Activated CD4-positive, alpha-beta T cell treated with anti-CD3 and anti-CD28 coated beads for 36 hours (primary cell): ENCODE measurements at regions of chr9 and their contacts with region 1.

Region 1: GRCh38 chr9:97982683-97983588 is at the start of gene ANP32B:
- DNase-seq: peak; percentile 98
- ATAC-seq: peak; percentile 89
- H3K4me3 Mint-ChIP-seq: peak within 1 kb of the TSS; percentile 81
- H3K27ac Mint-ChIP-seq: peak within 1 kb of the TSS; percentile 92
- H3K4me1 Mint-ChIP-seq: peaks cover 49% of the 10 kb centered on the region
- H3K27me3 Mint-ChIP-seq: no peaks in the 10 kb centered on the region
- total RNA-seq, gene ANP32B: 367 to 440 TPM

Region 2: DNA sequence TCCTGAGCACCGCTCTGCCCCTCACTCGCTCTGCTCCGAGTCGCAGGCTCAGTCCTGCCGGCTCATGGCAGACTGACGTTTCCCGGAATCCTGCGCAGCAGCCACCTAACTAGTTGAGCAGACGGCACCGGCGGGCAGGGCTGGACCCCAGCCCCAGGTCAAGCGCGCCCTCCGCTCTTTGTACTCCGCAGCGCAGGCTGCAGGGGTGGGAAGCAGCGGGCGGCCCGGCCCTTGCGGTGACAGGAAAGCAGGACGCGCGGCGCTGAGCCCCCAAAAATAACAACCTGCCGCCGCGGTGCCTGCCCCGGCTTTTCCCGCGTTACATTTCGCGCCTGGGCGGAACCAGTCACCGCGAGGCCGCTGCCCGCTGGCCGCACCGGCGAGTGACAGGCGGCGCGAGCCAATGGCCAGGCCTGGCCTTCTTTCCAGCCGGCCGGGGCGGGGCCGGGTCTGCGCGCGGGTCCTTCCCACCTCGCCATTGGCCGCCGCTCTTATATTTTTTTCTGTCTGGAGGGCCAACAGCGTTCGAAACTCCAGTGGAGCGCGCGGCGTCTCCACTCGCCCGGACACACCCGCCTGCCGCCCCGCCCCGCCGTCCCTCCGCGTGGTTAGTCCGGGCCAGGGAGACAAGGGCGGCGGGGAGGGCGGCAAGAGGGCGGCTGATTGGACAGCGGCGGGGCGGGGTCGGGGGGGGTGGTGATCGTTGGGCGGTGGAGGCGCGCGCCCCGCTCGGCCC is 1564.7 kb before region 1 on chr9 and contains the start of gene ZNF367:
- CTCF ChIA-PET with region 1: no interaction called
- POLR2A ChIA-PET with region 1: no interaction called
- intact Hi-C with region 1: loop called in 1 of 2 experiments (anchors 2 kb)
- DNase-seq: peak; percentile 97
- ATAC-seq: peak; percentile 81
- H3K4me3 Mint-ChIP-seq: peak within 1 kb of the TSS; percentile 93
- H3K27ac Mint-ChIP-seq: peak within 1 kb of the TSS; percentile 90
- H3K4me1 Mint-ChIP-seq: peaks cover 38% of the 10 kb centered on the region
- H3K27me3 Mint-ChIP-seq: no peaks in the 10 kb centered on the region
- total RNA-seq, gene ZNF367: 22.0 to 24.2 TPM

Region 3: DNA sequence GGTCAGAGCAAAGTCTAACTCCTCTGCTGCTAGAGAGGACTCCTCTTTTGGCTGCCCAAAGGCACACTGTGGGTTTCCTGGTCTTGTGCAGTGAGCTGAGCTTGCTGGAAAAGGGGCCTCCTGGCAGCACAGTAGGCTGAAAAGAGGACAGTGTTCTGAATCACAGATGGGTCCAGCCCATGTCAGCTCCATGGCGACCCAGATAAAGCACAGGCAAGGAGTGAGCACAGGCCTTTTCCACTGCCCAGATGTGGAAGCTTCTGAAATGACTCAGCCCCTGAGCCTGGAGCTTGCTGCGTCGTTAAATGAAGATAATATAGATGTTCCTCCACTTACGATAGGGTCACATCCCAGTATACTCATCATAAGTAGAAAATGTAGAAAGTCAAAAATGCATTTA is 667.4 kb before region 1 on chr9:
- CTCF ChIA-PET with region 1: no interaction called
- POLR2A ChIA-PET with region 1: no interaction called
- intact Hi-C with region 1: no loop called
- DNase-seq: no peak
- ATAC-seq: no peak
- H3K4me3 Mint-ChIP-seq: no peak overlapping the region
- H3K27ac Mint-ChIP-seq: no peak overlapping the region
- H3K4me1 Mint-ChIP-seq: peaks cover 4% of the 10 kb centered on the region
- H3K27me3 Mint-ChIP-seq: no peaks in the 10 kb centered on the region

Region 4: GRCh38 chr9:97993000-97993399 is 10.1 kb after region 1 on chr9:
- CTCF ChIA-PET with region 1: interaction called, 14 read pairs
- POLR2A ChIA-PET with region 1: interaction called, 6 read pairs
- intact Hi-C with region 1: no loop called
- DNase-seq: no peak
- ATAC-seq: peak; percentile 65
- H3K4me3 Mint-ChIP-seq: no peak overlapping the region
- H3K27ac Mint-ChIP-seq: peak overlapping the region; percentile 68
- H3K4me1 Mint-ChIP-seq: peaks cover 68% of the 10 kb centered on the region
- H3K27me3 Mint-ChIP-seq: no peaks in the 10 kb centered on the region

Region 5: DNA sequence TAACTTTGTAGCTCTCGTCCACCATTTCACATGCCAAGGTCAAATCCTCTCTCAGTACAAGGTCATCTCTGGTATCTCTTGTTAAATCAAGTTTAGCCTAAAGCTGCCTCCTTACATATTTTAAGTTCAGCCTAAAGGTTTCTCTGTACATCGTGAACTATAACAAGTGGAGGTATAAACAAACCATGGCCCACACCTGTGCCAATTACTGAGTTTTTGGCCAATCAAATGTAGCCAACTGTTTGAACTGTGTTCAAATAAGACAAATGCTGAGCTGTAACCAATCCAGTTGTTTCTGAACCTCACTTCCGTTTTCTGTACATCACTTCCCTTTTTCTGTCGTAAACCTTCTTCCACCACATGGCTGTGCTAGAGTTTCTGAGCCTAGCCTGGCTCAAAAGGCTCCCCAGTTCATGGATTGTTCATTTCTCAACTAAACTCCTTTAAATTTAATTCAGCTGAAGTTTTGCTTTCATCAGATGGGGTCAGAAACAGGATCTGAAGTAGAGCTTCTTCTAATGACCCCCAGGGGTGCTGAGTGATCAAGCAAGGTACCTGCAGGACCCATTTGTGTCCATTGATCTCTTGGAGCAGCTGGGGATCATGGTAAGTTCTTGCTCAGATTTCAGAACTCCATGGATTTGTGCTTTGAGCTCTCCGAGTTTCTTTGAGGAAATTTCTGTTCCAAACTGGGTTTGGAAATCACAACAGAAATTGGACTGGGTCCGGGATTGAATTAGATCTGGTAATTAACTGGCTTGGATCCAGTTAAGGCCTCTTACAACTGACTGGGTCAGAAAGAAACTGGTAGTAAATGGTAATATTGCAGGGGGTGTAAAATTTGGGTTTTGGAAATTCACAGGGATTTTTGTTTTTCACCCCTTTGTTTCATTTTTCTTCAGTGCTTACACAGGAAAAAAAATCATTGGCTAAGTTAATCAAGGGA is 62.6 kb after region 1 on chr9:
- CTCF ChIA-PET with region 1: interaction called, 3 read pairs
- POLR2A ChIA-PET with region 1: no interaction called
- intact Hi-C with region 1: loop called in 1 of 2 experiments (anchors 2 kb)
- DNase-seq: peak; percentile 52
- ATAC-seq: peak; percentile 96
- H3K4me3 Mint-ChIP-seq: peak overlapping the region; percentile 84
- H3K27ac Mint-ChIP-seq: peak overlapping the region; percentile 95
- H3K4me1 Mint-ChIP-seq: peaks cover 31% of the 10 kb centered on the region
- H3K27me3 Mint-ChIP-seq: no peaks in the 10 kb centered on the region

Region 6: GRCh38 chr9:98101868-98102273 is 118.9 kb after region 1 on chr9:
- CTCF ChIA-PET with region 1: no interaction called
- POLR2A ChIA-PET with region 1: no interaction called
- intact Hi-C with region 1: loop called in 1 of 2 experiments (anchors 1 kb)
- DNase-seq: peak; percentile 86
- ATAC-seq: peak; percentile 96
- H3K4me3 Mint-ChIP-seq: peak overlapping the region; percentile 49
- H3K27ac Mint-ChIP-seq: peak overlapping the region; percentile 95
- H3K4me1 Mint-ChIP-seq: peaks cover 84% of the 10 kb centered on the region
- H3K27me3 Mint-ChIP-seq: no peaks in the 10 kb centered on the region

Region 7: DNA sequence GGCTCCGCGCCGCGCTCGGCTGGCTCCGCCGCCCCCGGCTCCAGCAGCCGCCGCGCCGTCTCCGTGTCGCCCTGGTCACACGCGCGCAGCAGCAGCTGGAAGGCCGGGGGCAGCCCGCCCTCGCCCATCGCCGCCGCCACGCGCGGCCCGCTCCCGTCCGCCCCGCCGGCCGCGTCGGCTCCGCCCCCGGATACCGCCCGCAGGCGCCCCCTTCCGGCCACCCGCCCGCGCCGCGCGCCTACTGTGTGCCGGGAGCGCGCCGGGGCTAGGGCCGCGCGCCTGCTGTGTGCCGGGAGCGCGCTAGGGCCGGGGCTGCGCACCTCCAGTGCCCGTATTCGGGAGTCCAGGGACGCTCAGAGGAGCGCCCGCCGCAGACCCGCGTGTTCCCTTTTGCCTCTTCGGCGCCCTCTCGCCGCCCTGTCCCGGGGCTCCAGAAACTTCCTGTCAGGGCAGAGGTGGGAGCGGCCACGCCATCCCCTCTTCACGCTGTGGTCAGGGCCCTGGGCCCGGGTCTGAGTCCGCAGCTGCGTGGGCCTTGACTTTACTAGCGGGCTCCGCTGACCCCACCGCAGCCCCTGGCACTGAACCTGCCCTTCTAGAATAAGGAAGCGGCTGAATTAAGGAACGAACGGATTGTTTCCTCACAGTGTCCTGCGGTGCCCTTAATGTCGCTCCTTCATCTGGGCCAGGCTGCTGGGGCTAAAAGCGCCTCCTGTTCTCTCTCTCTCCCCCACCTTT is 813.6 kb after region 1 on chr9 and contains the start of gene ANKS6:
- CTCF ChIA-PET with region 1: no interaction called
- POLR2A ChIA-PET with region 1: no interaction called
- intact Hi-C with region 1: loop called in 1 of 2 experiments (anchors 1 kb)
- DNase-seq: peak; percentile 90
- ATAC-seq: peak; percentile 90
- H3K4me3 Mint-ChIP-seq: peak within 1 kb of the TSS; percentile 77
- H3K27ac Mint-ChIP-seq: peak within 1 kb of the TSS; percentile 81
- H3K4me1 Mint-ChIP-seq: peaks cover 25% of the 10 kb centered on the region
- H3K27me3 Mint-ChIP-seq: no peaks in the 10 kb centered on the region
- total RNA-seq, gene ANKS6: 15.8 to 17.4 TPM

Region 8: DNA sequence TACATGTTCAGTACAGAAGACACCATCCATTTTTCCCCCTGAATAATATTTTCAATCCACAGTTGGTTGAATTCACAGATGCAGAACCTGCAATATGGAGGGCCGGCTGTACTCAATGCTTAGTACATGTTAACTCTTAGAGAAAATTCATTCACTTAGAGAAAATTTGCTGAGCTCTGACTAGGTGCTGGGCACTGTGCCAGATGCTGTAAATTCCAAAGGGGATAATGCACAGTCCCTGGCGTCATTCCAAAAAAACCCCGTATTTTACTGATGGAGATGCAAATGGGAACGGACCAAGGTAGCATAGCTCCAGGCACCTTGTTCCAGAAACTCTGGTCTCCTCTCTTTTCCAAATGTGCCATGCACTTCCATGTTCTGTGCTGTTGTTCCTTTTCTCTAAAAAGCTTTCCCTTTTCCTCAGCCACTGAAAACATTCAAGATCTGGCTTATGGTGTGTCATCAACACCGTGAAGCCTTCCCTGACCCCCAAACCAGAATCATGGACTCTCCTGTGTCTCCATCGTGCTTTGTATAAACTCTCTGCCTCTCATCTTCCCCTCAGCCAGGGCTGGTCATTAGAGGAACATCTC is 905.1 kb after region 1 on chr9:
- CTCF ChIA-PET with region 1: no interaction called
- POLR2A ChIA-PET with region 1: no interaction called
- intact Hi-C with region 1: no loop called
- DNase-seq: no peak
- ATAC-seq: no peak
- H3K4me3 Mint-ChIP-seq: no peak overlapping the region
- H3K27ac Mint-ChIP-seq: no peak overlapping the region
- H3K4me1 Mint-ChIP-seq: no peaks in the 10 kb centered on the region
- H3K27me3 Mint-ChIP-seq: peaks cover 15% of the 10 kb centered on the region